Transverse colon (tissue), 4 donors: ENCODE measurements at regions of chr4 and their contacts with region 1.

Region 1: GRCh38 chr4:76430519-76431388 is 4.3 kb upstream of the SHROOM3 start:
- DNase-seq: no peak
- H3K4me3 ChIP-seq: no peak overlapping the region
- H3K27ac ChIP-seq: no peak overlapping the region
- H3K4me1 ChIP-seq: peaks cover 0 to 4% (median 0%) of the 10 kb centered on the region in 4 donors
- H3K27me3 ChIP-seq: no peaks in the 10 kb centered on the region
- CTCF ChIP-seq: peak; percentile 63 to 73 (median 68)
- EP300 ChIP-seq: no peak
- POLR2A ChIP-seq: no peak

Region 2: DNA sequence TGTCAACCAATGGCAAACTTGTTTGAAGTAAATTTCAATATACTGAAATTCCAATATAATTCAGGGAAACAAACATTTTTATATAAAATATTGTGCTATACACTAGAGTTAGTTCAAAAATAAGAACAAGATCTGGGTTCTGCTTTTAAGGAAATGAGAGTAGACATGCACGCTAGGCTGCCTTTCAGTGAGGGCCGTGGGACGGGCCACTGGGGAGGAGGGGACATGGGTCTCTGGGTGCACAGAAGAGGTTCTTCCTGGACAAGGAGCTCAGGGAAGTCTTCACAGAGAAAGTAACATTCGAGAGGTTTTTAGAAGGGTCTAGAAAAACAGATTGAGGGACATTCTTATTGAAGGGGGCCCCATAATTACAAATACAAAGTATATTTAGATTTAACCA is 68.7 kb after region 1 on chr4:
- in situ Hi-C with region 1: loop called in 1 of 4 experiments (anchors 10 kb)
- intact Hi-C with region 1: loop called (anchors 5 kb)
- DNase-seq: no peak
- H3K4me3 ChIP-seq: no peak overlapping the region
- H3K27ac ChIP-seq: no peak overlapping the region
- H3K4me1 ChIP-seq: peaks cover 0 to 15% (median 11%) of the 10 kb centered on the region in 4 donors
- H3K27me3 ChIP-seq: no peaks in the 10 kb centered on the region
- CTCF ChIP-seq: no peak
- EP300 ChIP-seq: no peak
- POLR2A ChIP-seq: no peak

Region 3: GRCh38 chr4:76758290-76758882 is 327.6 kb after region 1 on chr4:
- in situ Hi-C with region 1: loop called in 1 of 4 experiments (anchors 10 kb)
- intact Hi-C with region 1: no loop called
- DNase-seq: no peak
- H3K4me3 ChIP-seq: no peak overlapping the region
- H3K27ac ChIP-seq: no peak overlapping the region
- H3K4me1 ChIP-seq: peaks cover 0 to 16% (median 0%) of the 10 kb centered on the region in 4 donors
- H3K27me3 ChIP-seq: no peaks in the 10 kb centered on the region
- CTCF ChIP-seq: peak; percentile 69 to 84 (median 71)
- EP300 ChIP-seq: no peak
- POLR2A ChIP-seq: no peak

Region 4: GRCh38 chr4:77052352-77052751 is 621.6 kb after region 1 on chr4:
- in situ Hi-C with region 1: no loop called
- intact Hi-C with region 1: no loop called
- DNase-seq: peak; percentile 71
- H3K4me3 ChIP-seq: no peak overlapping the region
- H3K27ac ChIP-seq: no peak overlapping the region
- H3K4me1 ChIP-seq: peaks cover 0 to 5% (median 4%) of the 10 kb centered on the region in 4 donors
- H3K27me3 ChIP-seq: no peaks in the 10 kb centered on the region
- CTCF ChIP-seq: peak; percentile 42 to 51 (median 45)
- EP300 ChIP-seq: no peak
- POLR2A ChIP-seq: no peak